G401 (cell line): ENCODE measurements at regions of chr9 and their contacts with region 1.

Region 1: DNA sequence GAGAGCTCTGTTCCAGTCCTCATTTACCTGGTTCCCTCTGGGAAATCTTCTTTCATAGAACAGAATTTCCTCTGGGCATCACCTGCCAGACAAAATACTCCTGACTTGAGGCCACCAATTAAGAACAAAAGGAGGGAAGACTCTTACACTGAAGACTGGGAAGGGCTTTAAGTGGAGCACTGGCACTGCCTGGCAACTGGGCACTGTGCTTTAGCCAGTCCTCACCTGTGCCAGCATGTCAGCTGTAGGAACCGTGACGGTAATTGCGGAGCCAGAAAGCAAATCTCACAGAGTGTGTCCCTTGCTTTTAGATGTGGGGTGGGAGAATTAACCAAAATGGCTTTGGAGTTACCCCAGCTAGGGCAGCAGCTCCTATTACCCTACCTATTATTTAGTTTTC is 40.6 kb downstream of the FAM219A start:
- DNase-seq: peak; percentile 78

Region 2: GRCh38 chr9:34500623-34501267 is 83.0 kb after region 1 on chr9:
- in situ Hi-C with region 1: loop called (anchors 5 kb)
- DNase-seq: peak; percentile 87